ENCODE measurements at regions of chr11 and their contacts with region 1.

Region 1: GRCh38 chr11:64868904-64869570 is 9.4 kb downstream of the EHD1 start:
- DNase-seq: no peak
- ATAC-seq: no peak
- H3K4me3 ChIP-seq: no peak overlapping the region
- H3K27ac ChIP-seq: no peak overlapping the region
- H3K4me1 ChIP-seq: peaks cover 57% of the 10 kb centered on the region
- H3K27me3 ChIP-seq: no peaks in the 10 kb centered on the region
- CTCF ChIP-seq: no peak
- EP300 ChIP-seq: no peak
- POLR2A ChIP-seq: no peak
- RAD21 ChIP-seq: no peak

Region 2: DNA sequence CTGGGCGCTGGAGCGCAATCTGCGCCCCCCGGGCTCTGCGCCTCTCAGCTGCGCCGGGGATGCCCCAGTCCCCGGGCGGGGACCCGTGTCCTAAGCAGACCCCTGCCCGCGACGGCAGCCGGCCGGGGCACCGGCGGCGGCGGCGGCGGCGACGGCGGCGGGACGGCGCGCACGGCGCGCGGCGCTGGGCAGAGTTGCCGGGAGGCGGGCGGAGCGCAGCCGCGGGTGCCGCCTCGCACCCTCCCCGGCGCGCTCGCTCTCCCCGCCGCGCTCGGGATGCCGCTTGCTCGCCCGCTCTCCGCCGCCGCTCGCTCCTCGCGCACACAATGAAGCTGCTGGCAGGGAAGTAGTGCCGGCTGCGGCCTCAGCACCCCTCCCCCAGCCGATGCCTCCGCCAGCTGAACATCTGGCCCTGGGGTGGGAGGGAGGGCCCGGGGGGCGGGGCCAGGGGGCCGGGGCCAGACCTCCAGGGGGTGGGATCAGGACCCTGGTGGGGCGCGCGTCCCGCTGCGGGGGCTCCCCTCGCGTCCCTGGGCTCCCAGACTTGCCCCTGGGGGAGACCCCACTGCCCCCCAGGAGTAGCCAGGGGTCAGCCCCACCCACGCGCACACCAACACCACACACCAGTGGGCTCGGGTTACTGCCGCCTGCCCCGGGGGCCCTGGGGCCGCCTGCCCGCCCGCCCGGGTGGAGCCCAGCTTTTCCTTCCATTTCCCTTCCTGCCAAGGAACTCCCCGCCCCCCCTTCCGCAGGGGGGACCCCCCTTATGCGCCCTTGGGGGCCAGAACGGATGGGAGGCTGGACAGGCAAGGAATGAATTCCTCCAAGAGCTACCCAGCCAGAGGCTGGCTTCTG is 952.0 kb before region 1 on chr11 and contains the start of gene RCOR2:
- CTCF ChIA-PET with region 1: no interaction called
- POLR2A ChIA-PET with region 1: no interaction called
- in situ Hi-C with region 1: no loop called
- intact Hi-C with region 1: no loop called
- DNase-seq: peak; percentile 70
- ATAC-seq: peak; percentile 0
- H3K4me3 ChIP-seq: peak within 1 kb of the TSS; percentile 64 to 84 (median 76)
- H3K27ac ChIP-seq: peak within 1 kb of the TSS; percentile 82
- H3K4me1 ChIP-seq: peaks cover 48% of the 10 kb centered on the region
- H3K27me3 ChIP-seq: no peaks in the 10 kb centered on the region; a peak in 2 of 5 replicates
- CTCF ChIP-seq: 0 out of 2 replicates have a peak, but pooled peaks have one; percentile 1
- EP300 ChIP-seq: no peak
- POLR2A ChIP-seq: no peak
- RAD21 ChIP-seq: no peak
- total RNA-seq, gene RCOR2: 6.9 and 8.5 TPM in 2 replicates

Region 3: DNA sequence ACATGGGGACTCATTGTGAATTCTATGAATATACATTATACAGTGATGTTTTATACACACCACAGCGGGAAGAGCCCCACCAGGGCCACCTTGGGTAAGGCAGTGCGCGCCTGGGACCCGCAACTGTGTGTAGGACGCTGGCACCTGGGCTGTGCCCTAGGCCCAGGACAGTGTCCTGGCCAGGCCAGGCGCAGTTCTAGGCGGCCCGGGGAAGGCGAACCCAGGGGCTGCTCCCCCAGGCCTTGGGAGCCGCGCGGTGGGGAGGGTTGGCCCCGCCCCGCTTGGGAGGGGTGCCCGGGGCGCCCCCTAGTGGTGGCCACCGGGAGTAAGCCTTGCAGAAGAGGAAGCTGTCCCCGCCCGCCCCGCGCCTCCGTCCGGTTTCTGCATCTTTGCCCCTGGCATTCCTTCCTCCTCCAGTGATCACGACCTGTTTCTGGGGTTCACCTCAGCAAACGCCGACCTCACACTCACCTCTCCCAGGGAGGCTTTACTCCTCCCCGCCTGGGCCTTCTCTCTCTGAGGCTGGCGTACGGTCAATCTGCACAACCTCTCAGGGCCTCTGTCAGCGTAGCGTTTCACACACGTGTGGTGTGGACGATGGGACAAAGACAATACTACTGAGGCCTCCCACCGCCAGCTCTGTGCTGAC is 18.8 kb after region 1 on chr11:
- CTCF ChIA-PET with region 1: interaction called, 5 read pairs
- POLR2A ChIA-PET with region 1: interaction called, 132 read pairs
- in situ Hi-C with region 1: no loop called
- intact Hi-C with region 1: loop called (anchors 2 kb)
- DNase-seq: peak; percentile 46
- ATAC-seq: peak; percentile 63
- H3K4me3 ChIP-seq: peak overlapping the region; percentile 19 to 76 (median 42)
- H3K27ac ChIP-seq: peak overlapping the region; percentile 67
- H3K4me1 ChIP-seq: peaks cover 90% of the 10 kb centered on the region
- H3K27me3 ChIP-seq: no peaks in the 10 kb centered on the region; a peak in 1 of 5 replicates
- CTCF ChIP-seq: peak; percentile 94
- EP300 ChIP-seq: 0 out of 4 replicates have a peak, but pooled peaks of 1 of the 2 experiments have one; percentile 2
- POLR2A ChIP-seq: no peak; a peak in 1 of 4 replicates
- RAD21 ChIP-seq: peak; percentile 66